GM13976 (cell line): ENCODE measurements at regions of chr5 and their contacts with region 1.

Region 1: DNA sequence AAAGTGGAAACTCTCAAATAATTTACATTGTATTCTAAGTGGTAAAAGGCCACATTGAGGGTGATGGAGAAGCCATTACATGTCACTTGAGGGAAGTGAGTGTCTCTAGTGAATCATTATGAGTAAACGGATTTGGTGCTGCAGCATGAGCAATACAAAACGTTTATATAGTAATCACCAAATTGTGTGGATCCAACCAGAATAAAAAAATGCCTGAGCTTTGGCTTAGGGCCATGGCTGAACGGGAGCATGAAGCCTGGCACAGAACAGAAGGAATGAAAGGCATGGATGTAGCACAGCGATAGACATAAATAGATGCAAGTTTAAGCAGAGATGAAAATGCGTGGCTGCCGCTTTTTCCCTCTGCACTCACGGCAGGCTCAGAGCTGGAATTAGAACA is 58.3 kb downstream of the PTTG1 start:
- DNase-seq: no peak
- CTCF ChIP-seq: no peak

Region 2: GRCh38 chr5:159645179-159645846 is 834.6 kb before region 1 on chr5:
- in situ Hi-C with region 1: no loop called
- DNase-seq: no peak
- CTCF ChIP-seq: no peak

Region 3: DNA sequence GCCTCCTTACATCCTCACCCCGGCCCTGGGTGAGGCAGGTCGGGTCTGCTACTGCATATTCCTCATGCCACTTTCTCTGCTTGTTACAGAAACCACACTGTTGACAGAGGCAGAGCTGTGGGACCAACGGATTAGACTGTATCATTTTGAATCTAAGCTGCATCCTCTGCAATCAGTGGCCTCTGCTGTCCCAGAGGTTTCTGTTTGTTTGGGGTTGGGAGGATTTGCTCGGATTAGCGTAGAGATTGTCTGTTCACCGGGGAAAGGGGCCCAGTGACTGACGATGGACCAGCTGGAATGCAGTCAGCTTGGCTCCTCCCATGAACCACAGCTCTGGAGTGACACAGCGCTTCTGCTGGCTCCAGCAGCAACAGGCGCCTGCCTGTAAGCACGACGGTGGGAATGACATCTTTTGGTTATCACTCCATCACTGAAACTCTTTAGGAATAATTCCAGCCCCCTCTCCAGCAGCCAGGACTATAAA is 600.9 kb before region 1 on chr5:
- in situ Hi-C with region 1: no loop called
- DNase-seq: no peak
- CTCF ChIP-seq: no peak

Region 4: DNA sequence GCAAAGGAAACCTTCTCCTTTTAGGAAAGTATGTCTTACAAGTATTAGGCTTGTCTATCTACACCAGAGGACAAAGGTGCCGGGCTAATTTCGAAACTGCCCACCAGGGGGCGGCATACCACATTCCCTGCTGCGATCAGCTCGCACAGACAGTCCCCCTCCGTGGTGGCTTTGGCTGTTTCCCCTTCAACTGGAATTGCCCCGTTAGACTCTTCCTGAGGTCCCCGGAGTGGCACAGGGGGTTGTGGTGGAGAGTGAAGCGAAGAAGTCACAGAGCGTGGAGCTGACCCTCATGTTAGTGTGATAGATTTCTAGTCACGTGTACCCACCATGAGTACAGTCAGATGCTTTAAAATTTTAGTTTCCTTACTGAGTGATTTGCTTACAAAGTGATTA is 40.7 kb before region 1 on chr5:
- in situ Hi-C with region 1: loop called (anchors 5 kb)
- DNase-seq: peak; percentile 47
- CTCF ChIP-seq: peak; percentile 70